ENCODE measurements at regions of chr3 and their contacts with region 1.

Region 1: DNA sequence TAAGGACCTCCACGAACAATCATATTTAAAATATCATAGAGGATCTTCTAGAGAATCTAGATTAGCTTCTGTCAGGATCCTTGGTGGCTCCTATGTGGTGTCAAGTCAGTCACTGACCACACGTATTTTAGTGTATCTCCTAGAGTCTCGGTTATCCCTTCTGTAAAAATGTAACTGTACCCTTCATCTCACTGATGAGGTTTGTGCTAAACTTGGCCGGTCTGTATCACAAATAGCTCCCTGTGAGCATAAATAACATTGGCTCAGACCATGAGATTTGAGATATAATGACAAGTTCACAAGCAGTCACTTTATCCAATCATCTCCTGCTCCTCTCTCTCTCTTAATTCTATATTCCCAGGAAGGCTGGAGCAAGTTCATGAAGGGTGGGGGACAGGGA is 93.6 kb upstream of the ARL6 start:
- DNase-seq: no peak
- H3K4me3 ChIP-seq: no peak overlapping the region
- H3K27ac ChIP-seq: no peak overlapping the region
- H3K4me1 ChIP-seq: no peaks in the 10 kb centered on the region
- H3K27me3 ChIP-seq: no peaks in the 10 kb centered on the region
- CTCF ChIP-seq: no peak
- POLR2A ChIP-seq: no peak

Region 2: GRCh38 chr3:97264180-97264579 is 406.8 kb before region 1 on chr3:
- intact Hi-C with region 1: no loop called
- DNase-seq: no peak
- H3K4me3 ChIP-seq: no peak overlapping the region
- H3K27ac ChIP-seq: no peak overlapping the region
- H3K4me1 ChIP-seq: no peaks in the 10 kb centered on the region
- H3K27me3 ChIP-seq: no peaks in the 10 kb centered on the region
- CTCF ChIP-seq: no peak
- POLR2A ChIP-seq: no peak

Region 3: GRCh38 chr3:97658668-97659285 is 12.2 kb before region 1 on chr3:
- intact Hi-C with region 1: loop called (anchors 1 kb)
- DNase-seq: no peak
- H3K4me3 ChIP-seq: no peak overlapping the region
- H3K27ac ChIP-seq: no peak overlapping the region
- H3K4me1 ChIP-seq: no peaks in the 10 kb centered on the region
- H3K27me3 ChIP-seq: no peaks in the 10 kb centered on the region
- CTCF ChIP-seq: peak in 2 of 3 experiments; percentile 9 to 23
- POLR2A ChIP-seq: no peak

Region 4: DNA sequence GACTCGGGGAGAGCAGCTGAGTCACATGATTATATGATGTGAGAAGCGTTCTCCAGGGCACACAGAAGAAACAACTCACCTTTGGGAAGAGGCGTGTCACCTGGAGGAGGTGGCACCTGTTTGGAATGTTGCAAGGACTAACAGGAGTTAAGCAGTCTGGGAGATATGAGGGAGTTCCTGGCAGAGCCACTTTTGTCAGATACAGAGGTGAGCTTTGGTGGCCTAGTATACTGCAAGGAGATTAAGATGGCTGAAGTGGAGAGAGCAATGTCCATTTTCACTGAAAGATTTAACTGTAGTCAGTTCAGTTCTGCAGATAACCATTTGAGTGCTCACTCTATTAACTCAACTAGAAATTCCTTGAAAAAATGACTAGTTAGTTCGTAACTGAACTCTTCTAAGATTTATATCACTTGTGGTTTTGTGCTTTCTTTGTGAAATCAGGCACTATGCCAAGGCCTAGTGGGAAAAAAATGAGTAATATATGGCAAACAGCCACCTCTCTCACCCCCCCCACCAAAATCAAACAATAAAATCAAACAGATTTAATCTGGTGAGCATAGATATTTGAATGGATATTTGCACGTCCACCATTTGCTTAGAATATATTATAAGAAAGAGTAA is 212.1 kb after region 1 on chr3:
- intact Hi-C with region 1: no loop called
- DNase-seq: no peak
- H3K4me3 ChIP-seq: no peak overlapping the region
- H3K27ac ChIP-seq: peak overlapping the region; percentile 9
- H3K4me1 ChIP-seq: peaks cover 16% of the 10 kb centered on the region
- H3K27me3 ChIP-seq: no peaks in the 10 kb centered on the region
- CTCF ChIP-seq: no peak
- POLR2A ChIP-seq: no peak